PC-9 (cell line): ENCODE measurements at regions of chr14 and their contacts with region 1.

Region 1: DNA sequence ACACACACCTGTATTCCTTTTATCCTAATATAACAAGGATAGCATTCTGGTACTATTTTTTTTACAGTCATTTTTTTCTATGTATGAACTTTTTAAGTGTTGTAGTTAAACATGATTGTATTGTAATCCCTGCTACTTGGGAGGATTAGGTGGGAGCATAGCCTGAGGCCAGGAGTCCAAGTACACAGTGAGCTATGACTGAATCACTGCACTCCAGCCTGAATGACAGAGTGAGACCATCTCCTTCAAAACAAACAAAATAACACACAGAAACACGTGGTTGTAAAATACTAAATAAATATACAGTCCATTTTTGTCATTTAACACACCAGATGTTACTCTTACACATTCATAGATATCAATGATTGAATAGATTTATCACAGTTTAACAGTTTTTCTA is 56.9 kb downstream of the MAP4K5 start:
- DNase-seq: no peak
- H3K4me3 ChIP-seq: no peak overlapping the region
- H3K27ac ChIP-seq: no peak overlapping the region
- H3K4me1 ChIP-seq: no peaks in the 10 kb centered on the region
- H3K27me3 ChIP-seq: no peaks in the 10 kb centered on the region
- CTCF ChIP-seq: no peak

Region 2: DNA sequence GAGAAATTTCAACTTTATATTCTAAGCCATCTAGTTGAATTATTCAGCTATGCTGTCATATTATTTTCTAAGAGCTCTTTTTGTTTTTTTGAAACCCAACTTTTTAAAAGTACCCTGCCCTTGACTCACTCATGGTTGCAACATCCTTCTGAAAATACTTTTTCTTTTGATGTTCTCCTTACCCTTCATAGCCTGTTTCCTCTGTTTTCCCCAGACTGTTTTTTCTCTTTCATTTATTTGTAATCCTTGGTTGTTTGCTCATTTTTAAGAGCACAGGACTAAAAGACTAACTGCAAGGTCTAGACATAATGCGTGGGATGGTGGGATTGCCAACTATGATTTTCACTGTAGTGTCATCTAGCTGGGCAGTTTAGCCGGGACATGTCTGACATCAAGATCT is 57.6 kb before region 1 on chr14:
- CTCF ChIA-PET with region 1: no interaction called
- POLR2A ChIA-PET with region 1: no interaction called
- intact Hi-C with region 1: no loop called
- DNase-seq: no peak
- H3K4me3 ChIP-seq: no peak overlapping the region
- H3K27ac ChIP-seq: no peak overlapping the region
- H3K4me1 ChIP-seq: no peaks in the 10 kb centered on the region
- H3K27me3 ChIP-seq: no peaks in the 10 kb centered on the region
- CTCF ChIP-seq: no peak

Region 3: DNA sequence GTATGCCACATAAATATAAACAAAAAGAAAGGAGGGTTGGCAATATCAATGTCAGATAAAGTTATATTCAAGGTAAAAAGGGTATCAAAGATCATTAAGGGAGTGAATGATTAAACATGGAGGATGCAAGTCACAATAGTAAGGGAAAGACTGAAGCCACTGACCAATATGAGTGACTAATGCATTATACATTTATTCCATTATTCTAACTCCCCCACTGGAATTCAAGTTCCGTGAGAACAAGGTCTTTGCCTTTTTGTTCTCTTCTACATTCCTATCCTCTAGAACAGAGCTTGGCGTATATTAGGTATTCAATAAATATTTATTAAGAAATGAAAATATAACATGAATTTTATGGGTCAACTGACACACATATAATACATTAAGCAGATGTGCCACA is 26.2 kb after region 1 on chr14:
- CTCF ChIA-PET with region 1: no interaction called
- POLR2A ChIA-PET with region 1: interaction called, 24 read pairs
- intact Hi-C with region 1: no loop called
- DNase-seq: no peak
- H3K4me3 ChIP-seq: no peak overlapping the region
- H3K27ac ChIP-seq: no peak overlapping the region
- H3K4me1 ChIP-seq: no peaks in the 10 kb centered on the region
- H3K27me3 ChIP-seq: no peaks in the 10 kb centered on the region
- CTCF ChIP-seq: no peak